ENCODE measurements at regions of chr7 and their contacts with region 1.

Region 1: DNA sequence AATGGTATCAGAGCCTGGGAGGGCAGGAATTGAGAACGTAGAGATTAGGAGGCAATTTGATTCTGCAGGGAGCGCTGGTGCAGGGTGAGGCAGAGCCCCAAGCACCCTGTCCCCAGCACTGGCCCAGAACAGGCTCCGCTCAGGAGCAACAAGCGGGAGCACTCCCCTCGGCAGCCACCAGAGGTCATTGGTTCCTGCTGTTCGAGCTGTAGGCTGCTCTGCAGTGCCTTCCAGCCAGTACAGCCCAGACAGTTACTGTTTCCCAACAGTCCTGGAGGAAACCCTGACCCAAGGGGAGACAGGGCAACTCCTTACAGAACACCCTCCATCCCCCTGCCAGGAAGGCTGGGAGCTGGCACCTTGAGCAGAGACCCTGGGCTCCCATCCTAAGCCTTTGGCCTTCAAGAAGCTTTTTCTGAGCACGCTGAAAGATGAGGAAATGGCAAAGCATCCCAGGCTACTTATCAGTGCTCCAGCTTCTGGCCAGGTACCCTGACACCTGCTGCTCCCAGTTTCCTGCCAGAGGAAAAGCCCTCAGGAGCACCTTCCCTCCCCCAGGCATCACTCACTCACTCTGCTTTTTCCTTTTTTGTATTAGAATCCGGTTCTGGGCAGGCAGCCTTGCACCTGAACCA is 71.2 kb upstream of the EFCAB10 start:
- DNase-seq: peak; percentile 63
- H3K4me3 ChIP-seq: no peak overlapping the region
- H3K27ac ChIP-seq: no peak overlapping the region
- H3K4me1 ChIP-seq: peaks cover 10% of the 10 kb centered on the region
- H3K27me3 ChIP-seq: no peaks in the 10 kb centered on the region
- CTCF ChIP-seq: peak in 3 of 4 experiments; percentile 66 to 82 (median 79)
- POLR2A ChIP-seq: no peak

Region 2: GRCh38 chr7:105210721-105211205 is 441.7 kb before region 1 on chr7:
- intact Hi-C with region 1: no loop called
- DNase-seq: no peak
- H3K4me3 ChIP-seq: no peak overlapping the region
- H3K27ac ChIP-seq: no peak overlapping the region
- H3K4me1 ChIP-seq: no peaks in the 10 kb centered on the region
- H3K27me3 ChIP-seq: no peaks in the 10 kb centered on the region
- CTCF ChIP-seq: no peak
- POLR2A ChIP-seq: no peak

Region 3: DNA sequence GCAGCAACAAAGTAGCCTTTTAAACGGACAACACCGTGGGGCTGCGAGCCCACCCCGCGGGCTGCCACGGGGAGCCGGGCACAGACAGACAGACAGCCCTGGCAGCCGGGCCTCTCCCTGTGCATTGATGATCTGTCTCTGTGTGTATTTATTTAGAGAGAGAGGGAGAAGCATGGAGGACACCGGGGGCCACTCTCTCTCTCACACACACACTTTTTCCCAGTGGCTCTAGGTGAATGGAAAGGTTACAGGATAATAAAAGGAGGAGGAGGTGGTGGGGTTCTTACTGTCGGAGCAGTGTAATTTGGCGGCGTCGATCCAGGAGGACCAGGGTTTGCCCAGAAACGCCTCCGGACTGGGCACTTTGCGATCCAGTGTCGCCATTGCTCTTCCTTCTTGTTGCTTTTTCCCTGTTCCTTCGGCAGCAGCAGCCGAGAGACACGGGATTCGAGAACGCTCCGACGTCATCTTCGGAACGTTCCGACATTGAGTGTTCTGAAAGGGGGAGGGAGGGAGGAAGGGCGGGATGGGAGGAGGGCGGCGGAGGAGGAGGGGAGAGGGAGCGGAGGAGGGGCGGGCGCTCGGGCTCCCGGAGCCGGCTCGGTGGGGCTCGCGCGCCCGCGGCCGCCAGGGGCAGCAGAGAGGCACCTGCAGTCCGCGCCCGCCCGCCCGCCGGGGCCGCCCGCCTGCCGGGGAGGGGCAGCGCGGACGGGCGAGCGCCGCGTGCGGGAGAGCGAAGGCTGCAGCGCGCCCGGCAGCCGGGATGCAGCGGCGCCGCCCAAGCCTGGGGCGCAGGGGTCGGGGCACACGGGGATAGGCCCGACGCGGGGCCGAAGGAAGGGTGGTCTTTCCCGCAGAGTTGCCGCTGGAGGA is 223.9 kb after region 1 on chr7 and contains the start of gene ATXN7L1:
- intact Hi-C with region 1: loop called (anchors 10 kb)
- DNase-seq: peak; percentile 96
- H3K4me3 ChIP-seq: peak within 1 kb of the TSS; percentile 56 to 58
- H3K27ac ChIP-seq: peak within 1 kb of the TSS; percentile 79 to 85
- H3K4me1 ChIP-seq: no peaks in the 10 kb centered on the region
- H3K27me3 ChIP-seq: no peaks in the 10 kb centered on the region
- CTCF ChIP-seq: peak; percentile 50 to 85 (median 64)
- POLR2A ChIP-seq: peak; percentile 78
- total RNA-seq, gene ATXN7L1: 12.6 to 28.1 TPM

Region 4: DNA sequence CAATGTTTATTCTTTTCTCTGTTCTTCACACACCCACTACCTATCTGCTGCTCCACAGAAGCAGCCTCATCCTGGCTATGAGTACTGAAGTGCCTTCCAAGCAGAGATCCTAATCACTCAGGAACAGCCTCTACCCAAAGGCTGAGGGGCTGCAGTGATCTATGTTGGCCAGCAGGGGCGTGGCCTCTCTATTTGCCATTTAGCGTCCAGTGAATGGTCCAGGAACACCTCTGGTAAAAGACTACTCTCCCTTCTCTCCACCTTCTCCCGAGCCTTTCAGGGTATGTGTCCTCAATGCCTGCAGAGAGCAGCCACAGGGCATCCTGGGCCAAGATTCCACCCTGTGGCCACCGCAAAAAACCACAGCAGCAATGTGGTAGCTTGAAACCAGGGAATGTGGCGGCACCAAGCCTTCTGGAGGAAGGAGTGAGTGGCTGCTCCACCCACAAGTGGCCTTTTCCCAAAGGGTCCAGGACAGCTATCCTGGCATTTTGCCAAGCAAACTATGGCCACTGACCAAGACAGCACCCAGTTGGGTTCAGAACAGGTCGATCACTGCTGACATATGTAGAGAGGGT is 388.8 kb after region 1 on chr7:
- intact Hi-C with region 1: loop called (anchors 5 kb)
- DNase-seq: no peak
- H3K4me3 ChIP-seq: no peak overlapping the region
- H3K27ac ChIP-seq: no peak overlapping the region
- H3K4me1 ChIP-seq: no peaks in the 10 kb centered on the region
- H3K27me3 ChIP-seq: no peaks in the 10 kb centered on the region
- CTCF ChIP-seq: peak; percentile 30 to 68 (median 39)
- POLR2A ChIP-seq: no peak

Measured in prostate gland (tissue), 2 donors.